ENCODE measurements at regions of chr14 and their contacts with region 1.

Region 1: DNA sequence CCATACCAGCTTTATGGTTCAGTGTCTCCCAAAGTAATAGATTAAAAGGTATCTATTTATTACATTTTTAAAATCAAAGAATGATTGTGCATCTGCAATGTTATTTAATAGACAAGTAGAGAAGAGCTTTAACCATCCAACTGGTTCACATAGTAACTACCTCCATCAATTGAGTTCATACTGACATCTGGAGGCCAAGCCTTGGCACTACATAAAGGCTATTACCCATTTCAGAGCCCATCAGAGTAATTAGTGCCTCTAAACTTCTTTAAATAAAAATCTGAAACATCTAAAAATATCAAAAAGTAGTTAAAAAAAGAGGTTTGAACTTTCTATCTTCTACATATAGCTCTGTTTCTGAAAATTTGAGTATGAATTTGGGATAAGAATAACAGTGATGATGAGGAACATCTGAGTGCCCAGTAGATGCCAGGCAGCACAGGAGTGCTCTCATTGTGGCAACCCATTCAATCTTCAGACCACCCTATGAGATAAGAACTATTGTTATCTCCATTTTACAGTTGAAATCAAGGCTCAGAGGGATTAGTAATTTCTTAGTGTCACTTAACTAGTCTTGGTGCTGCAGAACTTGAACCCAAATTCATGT is 132.9 kb upstream of the DAAM1 start:
- DNase-seq: peak; percentile 30
- H3K4me3 ChIP-seq: no peak overlapping the region
- H3K27ac ChIP-seq: no peak overlapping the region
- H3K27me3 ChIP-seq: no peaks in the 10 kb centered on the region
- CTCF ChIP-seq: peak; percentile 86

Region 2: DNA sequence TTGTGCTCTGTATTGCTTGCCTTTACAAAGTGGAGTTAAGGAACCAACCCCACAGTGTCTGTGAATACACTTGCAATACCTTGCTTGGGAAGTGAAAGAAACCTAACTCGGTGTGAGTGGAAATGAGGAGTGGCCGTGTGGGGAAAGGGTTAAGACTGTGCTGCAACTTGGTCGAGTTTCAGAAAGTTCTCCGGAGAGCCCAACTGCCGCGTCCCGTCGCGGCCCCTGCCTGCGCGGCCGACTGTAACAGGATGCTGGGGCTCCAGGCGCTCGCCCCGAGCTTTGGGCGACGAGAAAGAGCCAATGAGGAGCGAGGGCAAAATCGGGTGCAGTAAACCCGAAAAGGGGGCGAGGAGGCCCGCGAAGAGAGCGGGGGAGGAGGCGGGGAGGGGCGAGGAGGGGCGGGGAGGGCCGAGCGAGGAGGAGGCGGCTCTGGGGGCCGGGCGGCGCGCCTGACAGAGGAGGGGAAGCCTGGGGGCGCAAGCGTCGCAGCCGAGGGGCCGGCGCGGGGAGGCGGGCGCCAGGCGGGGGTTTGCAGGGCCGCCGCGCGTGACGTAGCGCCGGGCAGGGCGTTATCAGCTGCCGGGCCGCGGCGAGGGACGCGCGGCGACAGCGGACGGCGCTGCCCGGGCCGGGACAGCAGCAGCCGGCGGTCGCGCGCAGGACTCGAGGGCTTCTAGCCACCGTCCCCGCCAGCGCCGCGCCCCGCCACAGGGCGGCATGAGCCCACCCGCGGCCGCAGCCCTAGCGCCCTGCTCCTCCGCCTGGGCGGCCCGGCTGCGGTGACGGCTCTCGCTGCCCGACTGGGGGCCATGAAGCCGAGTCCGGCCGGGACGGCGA is 417.9 kb before region 1 on chr14 and contains the start of gene DACT1:
- CTCF ChIA-PET with region 1: interaction called, 19 read pairs
- POLR2A ChIA-PET with region 1: no interaction called
- DNase-seq: peak; percentile 34
- H3K4me3 ChIP-seq: peak within 1 kb of the TSS; percentile 77
- H3K27ac ChIP-seq: peak within 1 kb of the TSS; percentile 92
- H3K27me3 ChIP-seq: no peaks in the 10 kb centered on the region
- CTCF ChIP-seq: no peak
- polyA plus RNA-seq, gene DACT1: 6.1 and 6.2 TPM in 2 replicates

Region 3: DNA sequence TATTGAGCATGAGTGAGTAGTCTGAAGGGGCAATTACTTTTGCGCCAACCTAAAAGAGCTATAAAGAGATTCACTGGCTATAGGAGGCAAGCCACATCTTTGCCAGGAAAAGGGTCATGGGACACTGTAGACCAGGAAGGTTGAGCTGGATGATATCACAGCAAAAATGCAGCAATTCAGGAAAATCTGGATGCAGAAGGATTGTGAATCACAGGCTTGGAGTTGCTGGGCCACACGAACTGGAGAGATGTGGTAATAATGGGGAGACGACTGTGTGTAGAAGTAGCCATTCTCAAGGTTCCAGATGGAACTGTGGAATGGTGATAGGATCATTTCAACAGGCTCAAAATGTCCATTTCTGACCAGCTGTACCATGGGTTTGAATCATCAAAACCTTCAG is 18.5 kb before region 1 on chr14:
- CTCF ChIA-PET with region 1: interaction called, 16 read pairs
- POLR2A ChIA-PET with region 1: no interaction called
- DNase-seq: no peak
- H3K4me3 ChIP-seq: no peak overlapping the region
- H3K27ac ChIP-seq: no peak overlapping the region
- H3K27me3 ChIP-seq: no peaks in the 10 kb centered on the region
- CTCF ChIP-seq: no peak

Region 4: GRCh38 chr14:59067127-59067894 is 11.8 kb after region 1 on chr14:
- CTCF ChIA-PET with region 1: interaction called, 37 read pairs
- POLR2A ChIA-PET with region 1: no interaction called
- DNase-seq: no peak
- H3K4me3 ChIP-seq: no peak overlapping the region
- H3K27ac ChIP-seq: no peak overlapping the region
- H3K27me3 ChIP-seq: no peaks in the 10 kb centered on the region
- CTCF ChIP-seq: no peak